ENCODE measurements at regions of chr11 and their contacts with region 1.

Region 1: GRCh38 chr11:78416305-78417178 is 1.1 kb downstream of the GAB2 start:
- DNase-seq: peak; percentile 38 to 84 (median 78)
- ATAC-seq: peak; percentile 74
- H3K4me3 ChIP-seq: peak overlapping the region; percentile 52 to 57
- H3K4me3 Mint-ChIP-seq: peak overlapping the region; percentile 91
- H3K27ac ChIP-seq: peak overlapping the region in 1 of 2 experiments; percentile 26
- H3K27ac Mint-ChIP-seq: peak overlapping the region; percentile 90
- H3K4me1 ChIP-seq: peaks cover 12% of the 10 kb centered on the region
- H3K4me1 Mint-ChIP-seq: peaks cover 29% of the 10 kb centered on the region
- H3K27me3 ChIP-seq: no peaks in the 10 kb centered on the region
- H3K27me3 Mint-ChIP-seq: peaks cover 23% of the 10 kb centered on the region
- CTCF ChIP-seq: peak; percentile 65

Region 2: DNA sequence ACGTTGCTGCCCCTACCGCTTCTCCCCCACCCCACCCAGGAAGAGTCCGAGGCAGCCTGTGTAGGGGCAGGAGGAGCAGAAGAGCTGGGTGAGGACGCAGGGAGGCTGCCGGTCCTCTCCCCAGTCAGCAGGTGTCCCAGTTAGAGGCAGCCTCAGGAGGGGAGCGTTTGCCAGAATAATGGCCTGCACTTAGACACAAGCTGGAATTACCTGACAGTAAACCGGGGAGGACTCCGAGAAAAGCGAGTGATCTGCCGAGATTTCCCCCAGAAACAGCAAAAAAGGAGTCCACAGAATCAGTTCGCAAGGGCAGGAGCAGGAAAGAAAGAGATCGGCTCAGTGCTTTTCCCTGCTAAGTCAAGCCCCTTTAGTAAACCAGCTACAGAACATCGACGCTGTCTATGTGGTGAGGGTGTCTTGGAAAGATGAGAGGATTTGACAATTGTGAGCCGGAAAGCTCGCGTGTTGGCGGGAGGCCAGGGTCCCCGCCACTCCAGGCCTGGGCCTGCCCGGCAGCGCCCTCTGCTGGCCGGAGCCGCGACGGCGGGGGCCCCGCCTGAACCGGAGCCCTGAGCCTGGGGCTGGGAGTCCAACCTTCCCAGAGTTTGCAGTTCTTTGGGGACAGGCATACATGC is 370.6 kb before region 1 on chr11:
- CTCF ChIA-PET with region 1: interaction called, 4 read pairs
- POLR2A ChIA-PET with region 1: no interaction called
- intact Hi-C with region 1: loop called in 1 of 2 experiments (anchors 1 kb)
- DNase-seq: peak; percentile 58 to 90 (median 78)
- ATAC-seq: peak; percentile 95
- H3K4me3 ChIP-seq: peak overlapping the region; percentile 15 to 48
- H3K4me3 Mint-ChIP-seq: peak overlapping the region; percentile 63
- H3K27ac ChIP-seq: no peak overlapping the region
- H3K27ac Mint-ChIP-seq: no peak overlapping the region
- H3K4me1 ChIP-seq: peaks cover 5% of the 10 kb centered on the region
- H3K4me1 Mint-ChIP-seq: peaks cover 13% of the 10 kb centered on the region
- H3K27me3 ChIP-seq: no peaks in the 10 kb centered on the region
- H3K27me3 Mint-ChIP-seq: no peaks in the 10 kb centered on the region
- CTCF ChIP-seq: peak; percentile 97

Region 3: DNA sequence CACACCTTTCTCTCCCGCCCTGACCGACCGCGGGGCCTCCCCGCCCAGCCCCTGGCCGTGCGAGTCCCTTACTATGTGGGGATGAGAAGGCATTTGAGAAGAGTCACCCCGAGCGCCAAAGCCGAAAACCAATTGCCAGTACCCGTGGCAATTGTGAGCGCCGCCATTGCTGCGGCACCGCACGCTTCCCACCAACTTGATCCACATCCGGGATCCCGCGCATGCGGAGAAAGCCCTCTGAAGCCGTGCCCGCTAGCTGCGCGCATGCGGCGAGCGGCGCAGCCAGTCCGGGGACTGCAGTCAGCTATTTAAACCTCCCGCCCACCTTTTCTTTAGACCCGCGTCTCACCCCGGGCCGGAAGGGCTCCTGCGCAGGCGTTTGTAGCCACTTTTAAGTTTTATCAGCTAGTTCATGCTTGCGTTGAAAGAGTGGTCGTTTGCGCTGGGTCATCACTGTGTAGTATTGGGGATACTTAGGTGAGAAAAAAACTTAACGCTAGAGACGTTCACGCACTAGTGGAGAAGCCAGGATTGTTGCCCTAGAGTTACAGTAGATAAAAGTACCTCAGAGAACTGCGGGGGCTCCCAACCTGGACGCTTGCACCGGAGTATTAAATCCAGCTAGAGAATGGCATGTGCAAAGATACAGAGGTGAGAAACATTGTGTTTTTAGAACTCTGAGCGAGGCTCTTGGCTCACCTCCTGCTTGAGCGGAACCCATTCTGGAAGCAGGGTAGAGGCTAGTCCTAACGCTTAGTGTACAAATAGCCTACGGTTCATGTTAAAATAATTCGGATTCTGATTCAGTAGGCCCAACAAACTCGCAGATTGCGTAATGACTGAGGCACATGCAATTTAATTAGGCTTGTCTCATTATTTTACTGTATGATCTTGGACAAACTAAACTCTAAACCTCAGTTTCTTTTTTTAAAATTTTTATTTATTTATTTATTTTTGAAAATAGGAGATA is 276.8 kb before region 1 on chr11 and contains the start of gene ALG8:
- CTCF ChIA-PET with region 1: interaction called, 3 read pairs
- POLR2A ChIA-PET with region 1: interaction called, 6 read pairs
- intact Hi-C with region 1: loop called (anchors 1 to 2 kb)
- DNase-seq: peak; percentile 96 to 99 (median 97)
- ATAC-seq: peak; percentile 95
- H3K4me3 ChIP-seq: peak within 1 kb of the TSS; percentile 92
- H3K4me3 Mint-ChIP-seq: peak within 1 kb of the TSS; percentile 95
- H3K27ac ChIP-seq: peak within 1 kb of the TSS; percentile 74 to 90
- H3K27ac Mint-ChIP-seq: peak within 1 kb of the TSS; percentile 97
- H3K4me1 ChIP-seq: peaks cover 19% of the 10 kb centered on the region
- H3K4me1 Mint-ChIP-seq: peaks cover 35% of the 10 kb centered on the region
- H3K27me3 ChIP-seq: no peaks in the 10 kb centered on the region
- H3K27me3 Mint-ChIP-seq: no peaks in the 10 kb centered on the region
- CTCF ChIP-seq: no peak
- total RNA-seq, gene ALG8: 14.2 to 17.5 TPM

Region 4: DNA sequence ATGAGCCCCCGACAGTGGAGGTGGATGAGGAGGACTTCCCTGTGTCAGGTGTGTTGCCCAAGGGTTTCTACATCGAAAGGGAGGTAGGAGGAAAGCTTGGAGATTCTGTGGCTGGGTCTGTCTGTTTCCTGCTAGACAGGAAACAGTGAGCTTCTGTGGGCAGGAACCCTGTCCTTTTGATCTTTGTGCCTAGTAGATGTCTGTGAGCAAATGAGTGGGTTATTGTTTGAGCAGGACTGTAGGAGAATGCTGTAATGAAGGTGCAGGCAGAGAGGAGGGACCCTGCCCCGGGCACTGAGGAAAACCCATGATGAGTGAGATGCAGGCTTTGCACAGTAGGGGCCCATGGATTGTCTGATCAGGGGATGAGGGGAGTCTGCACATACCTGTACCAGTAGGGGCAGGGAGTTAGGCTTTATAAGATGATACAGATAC is 213.8 kb before region 1 on chr11:
- CTCF ChIA-PET with region 1: no interaction called
- POLR2A ChIA-PET with region 1: interaction called, 3 read pairs
- intact Hi-C with region 1: loop called in 1 of 2 experiments (anchors 5 kb)
- DNase-seq: peak; percentile 31 to 90 (median 69)
- ATAC-seq: peak; percentile 79
- H3K4me3 ChIP-seq: peak overlapping the region; percentile 28 to 56
- H3K4me3 Mint-ChIP-seq: peak overlapping the region; percentile 82
- H3K27ac ChIP-seq: peak overlapping the region; percentile 67 to 89
- H3K27ac Mint-ChIP-seq: peak overlapping the region; percentile 98
- H3K4me1 ChIP-seq: peaks cover 28% of the 10 kb centered on the region
- H3K4me1 Mint-ChIP-seq: peaks cover 47% of the 10 kb centered on the region
- H3K27me3 ChIP-seq: no peaks in the 10 kb centered on the region
- H3K27me3 Mint-ChIP-seq: no peaks in the 10 kb centered on the region
- CTCF ChIP-seq: no peak

Region 5: GRCh38 chr11:78564490-78565467 is 148.2 kb after region 1 on chr11:
- CTCF ChIA-PET with region 1: interaction called, 58 read pairs
- POLR2A ChIA-PET with region 1: interaction called, 7 read pairs
- intact Hi-C with region 1: loop called (anchors 1 kb)
- DNase-seq: peak in 7 of 9 experiments; percentile 3 to 76 (median 35)
- ATAC-seq: peak; percentile 65
- H3K4me3 ChIP-seq: no peak overlapping the region
- H3K4me3 Mint-ChIP-seq: no peak overlapping the region
- H3K27ac ChIP-seq: no peak overlapping the region
- H3K27ac Mint-ChIP-seq: peak overlapping the region; percentile 16
- H3K4me1 ChIP-seq: peaks cover 13% of the 10 kb centered on the region
- H3K4me1 Mint-ChIP-seq: peaks cover 35% of the 10 kb centered on the region
- H3K27me3 ChIP-seq: no peaks in the 10 kb centered on the region
- H3K27me3 Mint-ChIP-seq: no peaks in the 10 kb centered on the region
- CTCF ChIP-seq: peak; percentile 81